CD4-positive, alpha-beta memory T cell (primary cell): ENCODE measurements at regions of chr19 and their contacts with region 1.

Region 1: GRCh38 chr19:20513179-20513934 is 52.2 kb downstream of the ZNF737 start:
- DNase-seq: peak in 2 of 5 donors; percentile 7 to 12
- H3K4me3 ChIP-seq: no peak overlapping the region
- H3K4me3 Mint-ChIP-seq: no peak overlapping the region
- H3K27ac ChIP-seq: no peak overlapping the region
- H3K27ac Mint-ChIP-seq: peak overlapping the region in 1 of 7 donors; percentile 1
- H3K4me1 ChIP-seq: no peaks in the 10 kb centered on the region
- H3K4me1 Mint-ChIP-seq: peaks cover 0 to 6% (median 0%) of the 10 kb centered on the region in 4 donors
- H3K27me3 ChIP-seq: no peaks in the 10 kb centered on the region
- H3K27me3 Mint-ChIP-seq: no peaks in the 10 kb centered on the region

Region 2: GRCh38 chr19:19997656-19998268 is 515.6 kb before region 1 on chr19:
- CTCF ChIA-PET with region 1: interaction called, 18 read pairs
- POLR2A ChIA-PET with region 1: no interaction called
- intact Hi-C with region 1: no loop called
- DNase-seq: peak; percentile 18 to 43 (median 38)
- H3K4me3 ChIP-seq: no peak overlapping the region
- H3K4me3 Mint-ChIP-seq: no peak overlapping the region
- H3K27ac ChIP-seq: no peak overlapping the region
- H3K27ac Mint-ChIP-seq: no peak overlapping the region
- H3K4me1 ChIP-seq: no peaks in the 10 kb centered on the region
- H3K4me1 Mint-ChIP-seq: no peaks in the 10 kb centered on the region
- H3K27me3 ChIP-seq: no peaks in the 10 kb centered on the region
- H3K27me3 Mint-ChIP-seq: peaks cover 0 to 1% of the 10 kb centered on the region in 2 donors

Region 3: GRCh38 chr19:20247016-20247683 is 266.2 kb before region 1 on chr19:
- CTCF ChIA-PET with region 1: interaction called, 8 read pairs
- POLR2A ChIA-PET with region 1: no interaction called
- intact Hi-C with region 1: loop called (anchors 1 kb)
- DNase-seq: peak in 4 of 5 donors; percentile 21 to 43 (median 34)
- H3K4me3 ChIP-seq: no peak overlapping the region
- H3K4me3 Mint-ChIP-seq: no peak overlapping the region
- H3K27ac ChIP-seq: no peak overlapping the region
- H3K27ac Mint-ChIP-seq: no peak overlapping the region
- H3K4me1 ChIP-seq: peaks cover 3% of the 10 kb centered on the region
- H3K4me1 Mint-ChIP-seq: peaks cover 2 to 11% (median 9%) of the 10 kb centered on the region in 4 donors
- H3K27me3 ChIP-seq: no peaks in the 10 kb centered on the region
- H3K27me3 Mint-ChIP-seq: no peaks in the 10 kb centered on the region

Region 4: GRCh38 chr19:20482721-20483120 is 30.6 kb before region 1 on chr19:
- CTCF ChIA-PET with region 1: interaction called, 15 read pairs
- POLR2A ChIA-PET with region 1: interaction called, 5 read pairs
- intact Hi-C with region 1: no loop called
- DNase-seq: peak in 4 of 5 donors; percentile 11 to 55 (median 41)
- H3K4me3 ChIP-seq: no peak overlapping the region
- H3K4me3 Mint-ChIP-seq: peak overlapping the region in 7 of 8 donors; percentile 12 to 83 (median 59)
- H3K27ac ChIP-seq: no peak overlapping the region
- H3K27ac Mint-ChIP-seq: peak overlapping the region in 3 of 7 donors; percentile 22 to 52 (median 36)
- H3K4me1 ChIP-seq: peaks cover 14% of the 10 kb centered on the region
- H3K4me1 Mint-ChIP-seq: peaks cover 4 to 36% (median 20%) of the 10 kb centered on the region in 4 donors
- H3K27me3 ChIP-seq: no peaks in the 10 kb centered on the region
- H3K27me3 Mint-ChIP-seq: no peaks in the 10 kb centered on the region

Region 5: DNA sequence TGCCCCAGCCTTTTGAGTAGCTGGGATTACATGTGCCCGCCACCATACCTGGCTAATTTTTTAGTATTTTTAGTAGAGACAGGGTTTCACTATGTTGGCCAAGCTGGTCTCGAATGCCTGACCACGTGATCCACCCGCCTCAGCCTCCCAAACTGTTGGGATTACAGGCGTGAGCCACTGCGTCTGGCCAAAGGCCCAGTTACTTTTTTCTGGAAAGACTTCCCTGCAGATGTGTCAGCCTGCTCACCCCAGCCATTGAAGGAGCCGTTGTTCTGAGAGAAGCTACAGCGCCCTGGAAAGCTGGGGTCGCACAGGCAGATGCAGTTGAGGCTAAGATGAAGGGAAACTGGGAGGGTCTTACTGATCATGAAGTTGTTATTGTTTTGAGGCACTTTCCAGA is 155.9 kb after region 1 on chr19:
- CTCF ChIA-PET with region 1: no interaction called
- POLR2A ChIA-PET with region 1: no interaction called
- intact Hi-C with region 1: no loop called
- DNase-seq: no peak
- H3K4me3 ChIP-seq: no peak overlapping the region
- H3K4me3 Mint-ChIP-seq: no peak overlapping the region
- H3K27ac ChIP-seq: no peak overlapping the region
- H3K27ac Mint-ChIP-seq: no peak overlapping the region
- H3K4me1 ChIP-seq: no peaks in the 10 kb centered on the region
- H3K4me1 Mint-ChIP-seq: peaks cover 2 to 7% (median 4%) of the 10 kb centered on the region in 4 donors
- H3K27me3 ChIP-seq: no peaks in the 10 kb centered on the region
- H3K27me3 Mint-ChIP-seq: peaks cover 0 to 2% of the 10 kb centered on the region in 2 donors